PC-9 (cell line): ENCODE measurements at regions of chr19 and their contacts with region 1.

Region 1: DNA sequence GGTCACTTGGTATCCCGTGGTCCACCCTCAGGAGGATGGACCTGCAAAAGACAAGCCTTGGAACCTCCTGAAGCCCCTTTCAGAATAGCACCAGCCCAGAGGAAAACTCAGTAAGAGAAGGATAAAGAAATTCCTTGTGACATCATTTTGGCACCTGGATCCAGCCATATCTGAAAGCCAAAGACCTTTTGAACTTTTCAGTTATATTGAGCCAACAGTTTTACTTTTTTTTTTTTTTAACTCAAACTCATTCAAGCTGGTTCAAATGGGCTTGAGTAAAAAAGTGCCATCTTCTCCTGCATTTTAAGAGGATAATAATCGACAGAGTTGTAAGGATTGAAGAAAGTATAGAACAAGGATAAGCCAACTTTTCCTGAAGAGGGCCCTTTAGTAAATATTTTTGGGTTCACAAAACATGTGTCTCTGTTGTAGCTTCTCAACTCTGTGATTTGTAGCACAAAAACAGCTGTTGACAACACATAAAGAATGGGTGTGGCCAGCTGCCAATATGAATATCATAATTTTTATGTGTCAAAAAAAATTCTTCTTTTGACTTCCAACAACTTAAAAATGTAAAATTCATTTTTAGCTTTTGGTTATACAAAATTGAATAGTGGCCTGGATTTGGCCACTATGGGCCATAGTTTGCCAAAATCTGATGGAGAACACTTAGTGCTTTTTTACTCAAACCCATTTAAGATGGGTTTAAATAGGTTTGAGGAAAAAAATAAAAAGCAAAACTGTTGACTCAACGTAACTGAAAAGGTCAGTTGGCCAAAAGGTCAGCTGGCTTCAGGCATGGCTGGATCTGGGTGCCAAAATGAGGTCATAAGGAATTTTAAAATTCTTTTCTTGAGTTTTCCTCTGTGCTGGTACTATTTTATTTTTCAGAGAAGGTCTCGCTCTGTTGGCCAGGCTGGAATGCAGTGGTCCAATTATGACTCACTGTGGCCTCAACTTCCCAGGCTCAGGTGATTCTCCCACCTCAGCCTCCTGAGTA is 50.7 kb downstream of the ACSBG2 start:
- DNase-seq: no peak
- H3K4me3 ChIP-seq: no peak overlapping the region
- H3K27ac ChIP-seq: no peak overlapping the region
- H3K4me1 ChIP-seq: no peaks in the 10 kb centered on the region
- H3K27me3 ChIP-seq: 0 out of 2 replicates have a peak, but pooled peaks cover 6% of the 10 kb centered on the region
- CTCF ChIP-seq: no peak

Region 2: DNA sequence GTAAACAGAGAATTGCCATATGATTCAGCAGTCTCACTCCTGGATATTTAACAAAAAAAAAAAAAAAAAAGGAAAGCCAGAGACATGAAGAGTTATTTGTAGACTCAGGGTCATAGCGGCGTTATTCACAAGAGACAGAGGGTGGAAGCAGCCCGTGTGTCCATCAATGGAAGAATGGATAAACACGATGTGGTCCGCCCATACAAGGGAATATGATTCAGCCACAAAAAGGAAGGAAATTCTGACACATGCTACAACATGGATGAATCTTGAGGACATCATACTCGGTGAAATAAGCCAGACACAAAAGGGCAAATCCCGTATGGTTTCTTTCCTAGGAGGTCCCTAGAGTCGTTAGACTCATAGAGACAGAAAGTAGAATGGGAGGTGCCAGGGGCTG is 35.8 kb before region 1 on chr19:
- CTCF ChIA-PET with region 1: no interaction called
- POLR2A ChIA-PET with region 1: no interaction called
- intact Hi-C with region 1: no loop called
- DNase-seq: no peak
- H3K4me3 ChIP-seq: no peak overlapping the region
- H3K27ac ChIP-seq: no peak overlapping the region
- H3K4me1 ChIP-seq: no peaks in the 10 kb centered on the region
- H3K27me3 ChIP-seq: peaks cover 26% of the 10 kb centered on the region
- CTCF ChIP-seq: no peak

Region 3: GRCh38 chr19:7287722-7288500 is 1101.8 kb after region 1 on chr19:
- CTCF ChIA-PET with region 1: no interaction called
- POLR2A ChIA-PET with region 1: interaction called, 11 read pairs
- intact Hi-C with region 1: no loop called
- DNase-seq: no peak
- H3K4me3 ChIP-seq: no peak overlapping the region
- H3K27ac ChIP-seq: no peak overlapping the region
- H3K4me1 ChIP-seq: no peaks in the 10 kb centered on the region
- H3K27me3 ChIP-seq: no peaks in the 10 kb centered on the region
- CTCF ChIP-seq: no peak